ENCODE measurements at regions of chr1 and their contacts with region 1.

Region 1: GRCh38 chr1:224052772-224053171 is 61.1 kb upstream of the FBXO28 start:
- DNase-seq: no peak
- H3K4me3 Mint-ChIP-seq: no peak overlapping the region
- H3K27ac Mint-ChIP-seq: no peak overlapping the region
- H3K4me1 Mint-ChIP-seq: peaks cover 5% of the 10 kb centered on the region
- H3K27me3 Mint-ChIP-seq: peaks cover 18% of the 10 kb centered on the region

Region 2: GRCh38 chr1:223695941-223696340 is 356.8 kb before region 1 on chr1:
- CTCF ChIA-PET with region 1: interaction called, 10 read pairs
- POLR2A ChIA-PET with region 1: no interaction called
- DNase-seq: no peak
- H3K4me3 Mint-ChIP-seq: no peak overlapping the region
- H3K27ac Mint-ChIP-seq: no peak overlapping the region
- H3K4me1 Mint-ChIP-seq: peaks cover 15% of the 10 kb centered on the region
- H3K27me3 Mint-ChIP-seq: peaks cover 2% of the 10 kb centered on the region

Region 3: GRCh38 chr1:223811634-223812415 is 240.9 kb before region 1 on chr1:
- CTCF ChIA-PET with region 1: interaction called, 12 read pairs
- POLR2A ChIA-PET with region 1: no interaction called
- DNase-seq: no peak
- H3K4me3 Mint-ChIP-seq: no peak overlapping the region
- H3K27ac Mint-ChIP-seq: no peak overlapping the region
- H3K4me1 Mint-ChIP-seq: peaks cover 15% of the 10 kb centered on the region
- H3K27me3 Mint-ChIP-seq: no peaks in the 10 kb centered on the region

Region 4: DNA sequence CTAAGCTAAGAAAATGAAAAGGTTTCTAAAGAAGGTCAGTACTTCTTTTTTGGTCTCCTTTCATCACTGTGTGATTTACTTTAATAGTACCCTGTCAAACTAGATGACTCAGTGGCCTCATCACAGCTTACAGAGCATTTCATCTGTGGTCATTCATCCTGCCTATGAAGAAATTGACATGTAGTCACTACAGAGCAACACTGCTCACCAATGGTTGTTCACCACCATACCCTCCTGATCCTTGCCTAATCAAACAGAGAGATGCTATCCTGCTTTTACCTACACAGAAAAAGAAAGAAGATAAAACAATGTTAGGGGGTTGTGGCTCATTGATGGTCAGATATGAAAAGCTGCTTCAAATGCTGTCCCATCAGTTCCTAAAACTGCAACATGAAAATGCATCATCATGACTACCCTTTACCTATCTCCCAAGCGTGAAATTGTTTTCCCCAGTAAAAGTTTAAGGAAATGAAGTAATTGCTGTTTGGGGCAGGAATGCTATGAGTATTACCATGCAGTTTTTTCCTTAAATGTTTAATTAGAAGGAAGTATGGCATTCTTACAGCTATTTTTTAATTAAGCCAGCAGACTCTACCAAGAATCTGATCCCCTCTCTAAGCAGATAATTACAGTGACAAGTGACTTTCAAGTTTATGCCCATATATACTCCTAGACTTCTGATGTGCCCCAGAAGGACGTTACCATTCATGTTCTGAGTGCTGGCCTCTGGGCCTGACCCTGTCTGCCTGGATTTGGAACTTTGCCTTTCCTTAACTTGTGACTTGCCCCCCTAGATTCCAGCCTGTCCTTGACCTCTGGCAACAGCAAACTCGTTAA is 15.1 kb after region 1 on chr1:
- CTCF ChIA-PET with region 1: interaction called, 15 read pairs
- POLR2A ChIA-PET with region 1: interaction called, 3 read pairs
- DNase-seq: no peak
- H3K4me3 Mint-ChIP-seq: no peak overlapping the region
- H3K27ac Mint-ChIP-seq: no peak overlapping the region
- H3K4me1 Mint-ChIP-seq: peaks cover 12% of the 10 kb centered on the region
- H3K27me3 Mint-ChIP-seq: peaks cover 10% of the 10 kb centered on the region

Region 5: GRCh38 chr1:224127925-224128819 is 75.4 kb after region 1 on chr1:
- CTCF ChIA-PET with region 1: no interaction called
- POLR2A ChIA-PET with region 1: no interaction called
- DNase-seq: no peak
- H3K4me3 Mint-ChIP-seq: no peak overlapping the region
- H3K27ac Mint-ChIP-seq: no peak overlapping the region
- H3K4me1 Mint-ChIP-seq: peaks cover 3% of the 10 kb centered on the region
- H3K27me3 Mint-ChIP-seq: no peaks in the 10 kb centered on the region